CD4-positive, alpha-beta memory T cell (primary cell): ENCODE measurements at regions of chr7 and their contacts with region 1.

Region 1: GRCh38 chr7:157612664-157613561 is 276.1 kb downstream of the DNAJB6 start:
- DNase-seq: peak; percentile 75 to 82 (median 78)
- H3K4me3 ChIP-seq: peak overlapping the region; percentile 6 to 74
- H3K4me3 Mint-ChIP-seq: peak overlapping the region; percentile 85 to 92 (median 90)
- H3K27ac ChIP-seq: peak overlapping the region; percentile 43
- H3K27ac Mint-ChIP-seq: peak overlapping the region; percentile 76 to 95 (median 91)
- H3K4me1 ChIP-seq: peaks cover 8% of the 10 kb centered on the region
- H3K4me1 Mint-ChIP-seq: peaks cover 5 to 18% (median 13%) of the 10 kb centered on the region in 4 donors
- H3K27me3 ChIP-seq: no peaks in the 10 kb centered on the region
- H3K27me3 Mint-ChIP-seq: no peaks in the 10 kb centered on the region

Region 2: GRCh38 chr7:156640257-156640948 is 972.5 kb before region 1 on chr7 and contains the start of gene RNF32:
- CTCF ChIA-PET with region 1: no interaction called
- POLR2A ChIA-PET with region 1: no interaction called
- intact Hi-C with region 1: loop called (anchors 5 kb)
- DNase-seq: peak; percentile 87 to 94 (median 91)
- H3K4me3 ChIP-seq: peak within 1 kb of the TSS; percentile 44 to 78
- H3K4me3 Mint-ChIP-seq: peak within 1 kb of the TSS; percentile 81 to 94 (median 92)
- H3K27ac ChIP-seq: peak within 1 kb of the TSS; percentile 80
- H3K27ac Mint-ChIP-seq: peak within 1 kb of the TSS; percentile 87 to 98 (median 96)
- H3K4me1 ChIP-seq: peaks cover 14% of the 10 kb centered on the region
- H3K4me1 Mint-ChIP-seq: peaks cover 3 to 22% (median 12%) of the 10 kb centered on the region in 4 donors
- H3K27me3 ChIP-seq: no peaks in the 10 kb centered on the region
- H3K27me3 Mint-ChIP-seq: peaks cover 0 to 3% of the 10 kb centered on the region in 2 donors
- total RNA-seq, gene RNF32: 1.3 to 2.0 TPM

Region 3: GRCh38 chr7:157502701-157503111 is 110.2 kb before region 1 on chr7:
- CTCF ChIA-PET with region 1: interaction called, 3 read pairs
- POLR2A ChIA-PET with region 1: interaction called, 11 read pairs
- intact Hi-C with region 1: no loop called
- DNase-seq: peak; percentile 87 to 94 (median 90)
- H3K4me3 ChIP-seq: peak overlapping the region; percentile 26 to 29
- H3K4me3 Mint-ChIP-seq: peak overlapping the region; percentile 79 to 96 (median 82)
- H3K27ac ChIP-seq: peak overlapping the region; percentile 64
- H3K27ac Mint-ChIP-seq: peak overlapping the region; percentile 82 to 99 (median 98)
- H3K4me1 ChIP-seq: peaks cover 27% of the 10 kb centered on the region
- H3K4me1 Mint-ChIP-seq: peaks cover 22 to 40% (median 28%) of the 10 kb centered on the region in 4 donors
- H3K27me3 ChIP-seq: no peaks in the 10 kb centered on the region
- H3K27me3 Mint-ChIP-seq: peaks cover 2 to 12% of the 10 kb centered on the region in 2 donors

Region 4: GRCh38 chr7:157568770-157569584 is 43.9 kb before region 1 on chr7:
- CTCF ChIA-PET with region 1: no interaction called
- POLR2A ChIA-PET with region 1: interaction called, 4 read pairs
- intact Hi-C with region 1: loop called (anchors 2 kb)
- DNase-seq: peak; percentile 62 to 80 (median 72)
- H3K4me3 ChIP-seq: peak overlapping the region in 1 of 2 donors; percentile 61
- H3K4me3 Mint-ChIP-seq: peak overlapping the region; percentile 91 to 98 (median 96)
- H3K27ac ChIP-seq: peak overlapping the region; percentile 40
- H3K27ac Mint-ChIP-seq: peak overlapping the region; percentile 79 to 98 (median 97)
- H3K4me1 ChIP-seq: peaks cover 17% of the 10 kb centered on the region
- H3K4me1 Mint-ChIP-seq: peaks cover 12 to 52% (median 29%) of the 10 kb centered on the region in 4 donors
- H3K27me3 ChIP-seq: no peaks in the 10 kb centered on the region
- H3K27me3 Mint-ChIP-seq: no peaks in the 10 kb centered on the region

Region 5: DNA sequence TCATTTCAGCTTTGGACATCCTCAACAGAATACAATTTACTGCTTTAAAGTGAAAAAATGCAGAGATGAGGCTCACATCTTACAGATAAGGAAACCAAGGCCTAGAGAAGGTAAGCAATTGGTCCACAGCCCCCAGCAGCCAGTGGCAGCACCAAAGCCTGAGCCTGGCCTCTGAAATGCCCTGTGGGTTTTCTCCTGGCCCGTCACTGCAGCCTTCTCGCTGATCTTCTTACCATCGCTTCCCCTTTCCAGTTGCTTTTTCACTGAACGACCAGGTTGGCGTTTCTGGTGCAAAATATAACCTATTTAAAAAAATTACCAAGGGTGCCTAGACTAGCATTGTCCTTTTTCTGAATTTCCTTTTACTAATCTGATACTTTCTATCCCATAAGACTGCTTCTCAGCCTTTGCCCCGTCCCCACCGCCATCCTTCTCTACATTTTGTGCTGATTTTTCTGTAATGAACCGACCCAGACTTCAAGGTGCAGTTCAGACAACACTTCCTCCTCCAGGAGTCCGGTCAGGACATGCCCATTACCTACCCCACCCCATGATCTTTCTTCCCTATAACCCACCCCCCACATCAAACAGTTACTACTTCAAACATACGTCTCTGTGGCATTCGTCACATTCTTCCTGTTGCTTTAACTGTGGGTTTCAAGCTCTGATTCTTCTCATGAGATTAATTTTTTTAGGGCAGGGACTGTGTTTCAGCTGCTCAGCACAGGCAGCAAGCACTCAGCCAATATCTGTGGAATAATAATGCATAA is 13.2 kb after region 1 on chr7:
- CTCF ChIA-PET with region 1: interaction called, 19 read pairs
- POLR2A ChIA-PET with region 1: interaction called, 30 read pairs
- intact Hi-C with region 1: no loop called
- DNase-seq: peak; percentile 53 to 75 (median 69)
- H3K4me3 ChIP-seq: peak overlapping the region in 1 of 2 donors; percentile 13
- H3K4me3 Mint-ChIP-seq: peak overlapping the region; percentile 60 to 84 (median 81)
- H3K27ac ChIP-seq: no peak overlapping the region
- H3K27ac Mint-ChIP-seq: peak overlapping the region; percentile 7 to 96 (median 91)
- H3K4me1 ChIP-seq: peaks cover 57% of the 10 kb centered on the region
- H3K4me1 Mint-ChIP-seq: peaks cover 33 to 78% (median 61%) of the 10 kb centered on the region in 4 donors
- H3K27me3 ChIP-seq: no peaks in the 10 kb centered on the region
- H3K27me3 Mint-ChIP-seq: peaks cover 2 to 3% of the 10 kb centered on the region in 2 donors

Region 6: DNA sequence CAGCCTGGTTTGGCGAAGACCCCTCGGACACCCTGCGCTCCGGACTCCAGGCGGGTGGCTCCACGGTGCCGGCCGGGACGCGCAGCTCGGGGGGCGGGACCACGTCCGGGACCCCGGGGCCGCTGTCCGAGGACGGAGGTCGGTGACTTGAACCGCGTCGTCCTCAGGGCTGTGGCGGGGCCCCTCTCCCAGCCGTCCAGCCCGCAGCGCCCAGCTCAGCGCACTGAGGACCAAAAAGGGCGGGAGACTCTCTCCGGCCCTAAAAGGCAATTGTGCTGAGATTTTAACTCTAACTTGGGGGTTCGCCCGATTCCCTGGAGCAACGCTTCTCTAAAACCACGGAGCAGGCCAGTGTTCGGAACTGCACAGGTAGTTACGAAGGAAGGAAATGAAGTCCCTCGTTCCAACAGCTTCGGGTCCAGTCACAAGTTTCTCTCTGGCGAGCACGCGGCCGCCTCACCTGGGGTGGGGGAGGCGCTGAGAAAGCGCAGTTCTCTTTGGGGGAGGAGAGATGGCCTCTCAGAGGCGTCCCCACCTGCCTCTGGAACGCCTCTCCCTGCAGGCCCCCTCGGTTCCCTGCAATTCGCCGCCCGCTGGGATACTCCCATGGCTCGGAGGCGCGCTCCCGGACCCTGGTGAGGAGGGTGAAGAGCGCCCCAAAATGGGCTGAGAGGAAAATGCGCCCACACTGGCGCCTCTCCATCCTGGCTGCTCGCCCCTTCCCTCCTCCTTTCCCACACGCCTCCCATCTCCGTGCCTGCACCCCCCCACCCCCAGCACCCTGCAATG is 76.5 kb after region 1 on chr7:
- CTCF ChIA-PET with region 1: no interaction called
- POLR2A ChIA-PET with region 1: no interaction called
- intact Hi-C with region 1: loop called (anchors 5 kb)
- DNase-seq: no peak
- H3K4me3 ChIP-seq: no peak overlapping the region
- H3K4me3 Mint-ChIP-seq: peak overlapping the region in 7 of 8 donors; percentile 10 to 81 (median 54)
- H3K27ac ChIP-seq: no peak overlapping the region
- H3K27ac Mint-ChIP-seq: no peak overlapping the region
- H3K4me1 ChIP-seq: peaks cover 33% of the 10 kb centered on the region
- H3K4me1 Mint-ChIP-seq: peaks cover 14 to 30% (median 23%) of the 10 kb centered on the region in 4 donors
- H3K27me3 ChIP-seq: peaks cover 32% of the 10 kb centered on the region
- H3K27me3 Mint-ChIP-seq: peaks cover 36 to 39% of the 10 kb centered on the region in 2 donors

Region 7: DNA sequence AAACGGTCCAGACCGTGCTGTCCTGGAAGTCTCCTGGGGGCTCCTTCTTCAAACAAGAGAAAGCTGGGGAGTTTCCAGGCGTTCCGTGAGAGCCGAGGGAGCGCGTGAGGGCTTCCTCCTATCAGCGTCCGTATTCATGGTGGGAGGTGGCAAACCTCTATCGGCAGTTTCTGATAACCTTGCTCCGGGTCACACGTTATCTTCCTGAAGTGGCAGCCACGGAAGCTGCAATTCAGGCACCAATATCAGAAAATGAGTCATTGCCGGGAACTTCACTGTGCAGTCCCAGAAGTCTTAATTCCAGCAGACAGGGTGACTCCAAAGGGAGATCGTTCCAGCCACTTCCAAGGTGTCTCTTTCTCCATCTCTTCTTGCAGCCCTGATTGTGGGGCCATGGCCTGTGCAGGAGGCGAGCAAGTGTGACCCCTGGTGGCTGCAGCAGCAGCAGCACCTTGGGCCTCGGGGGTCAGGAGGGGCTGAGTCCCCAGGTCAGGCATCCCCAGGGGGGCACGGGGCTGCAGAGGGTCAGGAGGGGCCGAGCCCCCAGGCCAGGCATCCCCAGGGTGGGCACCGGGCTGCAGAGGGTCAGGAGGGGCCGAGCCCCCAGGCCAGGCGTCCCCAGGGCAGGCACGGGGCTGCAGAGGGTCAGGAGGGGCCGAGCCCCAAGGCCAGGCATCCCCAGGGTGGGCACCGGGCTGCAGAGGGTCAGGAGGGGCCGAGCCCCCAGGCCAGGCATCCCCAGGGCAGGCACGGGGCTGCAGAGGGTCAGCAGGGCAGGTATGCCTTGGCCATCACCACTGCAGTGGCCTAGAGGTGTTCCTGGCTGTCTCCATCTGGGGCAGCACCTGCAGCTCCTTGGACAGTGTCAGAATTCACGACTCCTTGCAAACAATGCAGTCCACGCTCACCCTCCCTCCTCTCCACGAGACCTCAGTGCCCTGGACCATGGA is 262.6 kb after region 1 on chr7:
- CTCF ChIA-PET with region 1: no interaction called
- POLR2A ChIA-PET with region 1: no interaction called
- intact Hi-C with region 1: loop called (anchors 5 kb)
- DNase-seq: peak; percentile 53 to 66 (median 60)
- H3K4me3 ChIP-seq: peak overlapping the region; percentile 39 to 42
- H3K4me3 Mint-ChIP-seq: peak overlapping the region; percentile 58 to 90 (median 79)
- H3K27ac ChIP-seq: no peak overlapping the region
- H3K27ac Mint-ChIP-seq: peak overlapping the region; percentile 4 to 91 (median 53)
- H3K4me1 ChIP-seq: peaks cover 22% of the 10 kb centered on the region
- H3K4me1 Mint-ChIP-seq: peaks cover 13 to 24% (median 19%) of the 10 kb centered on the region in 4 donors
- H3K27me3 ChIP-seq: no peaks in the 10 kb centered on the region
- H3K27me3 Mint-ChIP-seq: peaks cover 0 to 2% of the 10 kb centered on the region in 2 donors